ENCODE measurements at regions of chr10 and their contacts with region 1.

Region 1: DNA sequence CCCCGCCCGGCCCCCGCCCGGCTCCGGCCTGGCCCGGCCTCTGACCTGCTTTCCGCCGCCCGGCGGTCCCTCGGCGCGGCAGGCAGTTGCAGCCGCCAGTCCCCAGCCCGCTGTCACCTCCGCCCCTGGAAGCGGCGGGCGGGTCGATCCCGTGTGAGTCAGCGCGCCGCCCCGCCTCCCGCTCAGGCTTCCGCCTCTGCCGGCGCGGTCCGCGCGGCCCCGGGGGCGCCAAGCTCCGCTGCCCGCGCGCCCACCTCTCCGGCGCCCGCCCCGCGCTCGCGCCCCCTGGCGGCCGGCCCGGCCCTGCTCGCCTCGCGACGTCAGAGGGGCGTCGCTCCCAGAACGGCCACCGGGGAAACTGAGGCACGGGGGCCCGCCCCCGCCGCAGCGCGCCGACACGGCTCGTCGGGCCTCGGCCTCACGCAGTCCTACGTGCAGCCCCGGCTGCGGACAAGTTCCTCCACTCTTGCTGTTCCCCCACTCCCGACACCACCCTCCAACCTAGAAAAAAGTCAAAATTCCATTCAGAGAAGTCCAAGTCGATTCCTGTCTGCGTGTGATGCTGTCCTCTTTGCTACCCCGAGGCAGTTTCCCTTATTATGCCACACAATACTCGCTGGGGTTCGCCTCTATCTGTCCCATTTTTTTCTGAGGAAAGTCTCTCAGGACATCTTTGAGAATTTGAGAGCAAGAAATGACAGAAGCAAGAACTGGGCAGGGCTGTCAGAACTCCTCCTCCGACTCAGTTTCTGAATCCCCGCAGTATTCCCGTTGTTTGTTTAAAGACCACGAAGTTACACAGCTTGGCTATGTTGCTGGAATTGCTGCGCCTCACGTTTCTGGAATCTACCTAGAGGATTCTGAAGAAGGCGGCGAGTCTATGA is at the start of gene DNMBP:
- DNase-seq: peak; percentile 99
- H3K4me3 ChIP-seq: peak within 1 kb of the TSS; percentile 79 to 93
- H3K27ac ChIP-seq: peak within 1 kb of the TSS; percentile 50 to 99; a peak in 3 of 4 replicates
- H3K4me1 ChIP-seq: peaks cover 10 to 13% of the 10 kb centered on the region in 2 experiments
- H3K27me3 ChIP-seq: no peaks in the 10 kb centered on the region
- CTCF ChIP-seq: peak; percentile 65
- EP300 ChIP-seq: no peak
- RAD21 ChIP-seq: peak; percentile 29; the same call in 1 of the 2 replicates
- polyA plus RNA-seq, gene DNMBP: 36.0 and 40.2 TPM in 2 replicates

Region 2: DNA sequence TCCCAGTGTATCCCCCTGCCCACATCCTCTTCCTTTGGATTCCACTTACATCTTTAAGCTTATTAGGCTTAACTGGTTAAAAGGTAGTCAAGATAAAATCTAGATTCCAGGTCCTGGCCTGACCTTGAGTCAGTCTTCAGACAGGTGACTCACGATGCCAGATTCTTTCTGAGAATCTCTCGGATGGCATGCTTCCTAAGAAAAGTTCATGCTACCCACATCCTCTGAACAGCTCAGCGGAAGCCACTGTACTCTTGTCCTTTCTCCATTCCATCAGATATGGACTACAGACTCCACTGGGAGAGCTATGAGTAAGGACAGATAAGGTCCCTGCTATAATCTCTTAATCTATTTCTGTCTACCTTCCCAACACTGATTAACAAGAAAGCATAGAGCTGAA is 43.7 kb before region 1 on chr10:
- CTCF ChIA-PET with region 1: interaction called, 28 read pairs
- POLR2A ChIA-PET with region 1: no interaction called
- DNase-seq: peak; percentile 19
- H3K4me3 ChIP-seq: no peak overlapping the region; a peak in 1 of 4 replicates
- H3K27ac ChIP-seq: peak overlapping the region; percentile 60 to 98; a peak in 3 of 4 replicates
- H3K4me1 ChIP-seq: peaks cover 2 to 31% of the 10 kb centered on the region in 2 experiments; a peak in 3 of 4 replicates
- H3K27me3 ChIP-seq: no peaks in the 10 kb centered on the region
- CTCF ChIP-seq: no peak
- EP300 ChIP-seq: peak; percentile 80 to 100
- RAD21 ChIP-seq: no peak

Region 3: GRCh38 chr10:99983280-99983988 is 26.6 kb before region 1 on chr10:
- CTCF ChIA-PET with region 1: interaction called, 20 read pairs
- POLR2A ChIA-PET with region 1: no interaction called
- DNase-seq: peak; percentile 73
- H3K4me3 ChIP-seq: peak overlapping the region in 1 of 2 experiments; percentile 20; a peak in 1 of 4 replicates
- H3K27ac ChIP-seq: peak overlapping the region; percentile 79 to 94
- H3K4me1 ChIP-seq: peaks cover 9 to 58% of the 10 kb centered on the region in 2 experiments; a peak in 3 of 4 replicates
- H3K27me3 ChIP-seq: no peaks in the 10 kb centered on the region
- CTCF ChIP-seq: no peak
- EP300 ChIP-seq: peak in 1 of 2 experiments; percentile 84; a peak in 2 of 4 replicates
- RAD21 ChIP-seq: no peak

Region 4: DNA sequence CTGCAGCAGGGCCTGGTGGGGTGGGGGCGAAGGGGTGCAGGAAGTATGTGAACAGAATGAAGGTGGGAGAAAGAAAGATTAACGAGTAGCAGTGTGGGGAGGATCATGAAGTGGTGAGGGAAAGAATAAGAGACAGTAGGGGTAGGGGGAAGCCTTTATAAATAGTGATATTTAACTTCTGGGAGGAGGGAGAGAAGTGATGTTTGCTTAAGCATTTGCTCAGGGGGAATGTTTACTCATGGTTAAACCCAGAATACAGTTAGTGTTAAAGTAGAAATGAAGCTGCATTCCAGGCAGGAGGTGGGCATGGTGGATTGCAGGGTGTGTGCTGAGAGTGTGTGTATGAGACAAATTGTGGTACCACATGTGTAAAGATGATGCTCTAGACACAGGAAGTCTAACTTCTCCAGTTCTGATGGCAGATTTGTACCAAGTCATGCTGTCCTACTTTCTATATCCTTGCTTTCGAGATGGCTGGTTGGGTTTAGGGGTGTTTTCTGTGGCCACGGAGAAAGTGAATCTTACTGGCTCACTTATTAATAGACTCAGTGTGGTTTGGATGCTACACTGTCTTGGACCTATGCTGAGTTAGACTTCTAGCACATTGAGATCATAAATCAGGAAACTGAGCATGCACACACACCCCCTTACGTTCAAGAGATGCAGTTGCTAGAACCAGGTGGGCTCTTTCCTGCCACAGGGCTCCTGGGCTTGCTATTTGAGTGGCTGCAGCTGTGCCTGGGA is 10.3 kb after region 1 on chr10:
- CTCF ChIA-PET with region 1: interaction called, 25 read pairs
- POLR2A ChIA-PET with region 1: no interaction called
- DNase-seq: no peak
- H3K4me3 ChIP-seq: no peak overlapping the region
- H3K27ac ChIP-seq: no peak overlapping the region
- H3K4me1 ChIP-seq: peaks cover 0 to 5% of the 10 kb centered on the region in 2 experiments; a peak in 1 of 4 replicates
- H3K27me3 ChIP-seq: no peaks in the 10 kb centered on the region
- CTCF ChIP-seq: no peak
- EP300 ChIP-seq: no peak
- RAD21 ChIP-seq: no peak

Region 5: GRCh38 chr10:100038561-100039071 is 28.6 kb after region 1 on chr10:
- CTCF ChIA-PET with region 1: interaction called, 53 read pairs
- POLR2A ChIA-PET with region 1: no interaction called
- DNase-seq: no peak
- H3K4me3 ChIP-seq: no peak overlapping the region
- H3K27ac ChIP-seq: no peak overlapping the region
- H3K4me1 ChIP-seq: peaks cover 0 to under 1% of the 10 kb centered on the region in 2 experiments; a peak in 1 of 4 replicates
- H3K27me3 ChIP-seq: no peaks in the 10 kb centered on the region
- CTCF ChIP-seq: no peak
- EP300 ChIP-seq: no peak
- RAD21 ChIP-seq: no peak